ENCODE measurements at regions of chr1 and their contacts with region 1.

Region 1: DNA sequence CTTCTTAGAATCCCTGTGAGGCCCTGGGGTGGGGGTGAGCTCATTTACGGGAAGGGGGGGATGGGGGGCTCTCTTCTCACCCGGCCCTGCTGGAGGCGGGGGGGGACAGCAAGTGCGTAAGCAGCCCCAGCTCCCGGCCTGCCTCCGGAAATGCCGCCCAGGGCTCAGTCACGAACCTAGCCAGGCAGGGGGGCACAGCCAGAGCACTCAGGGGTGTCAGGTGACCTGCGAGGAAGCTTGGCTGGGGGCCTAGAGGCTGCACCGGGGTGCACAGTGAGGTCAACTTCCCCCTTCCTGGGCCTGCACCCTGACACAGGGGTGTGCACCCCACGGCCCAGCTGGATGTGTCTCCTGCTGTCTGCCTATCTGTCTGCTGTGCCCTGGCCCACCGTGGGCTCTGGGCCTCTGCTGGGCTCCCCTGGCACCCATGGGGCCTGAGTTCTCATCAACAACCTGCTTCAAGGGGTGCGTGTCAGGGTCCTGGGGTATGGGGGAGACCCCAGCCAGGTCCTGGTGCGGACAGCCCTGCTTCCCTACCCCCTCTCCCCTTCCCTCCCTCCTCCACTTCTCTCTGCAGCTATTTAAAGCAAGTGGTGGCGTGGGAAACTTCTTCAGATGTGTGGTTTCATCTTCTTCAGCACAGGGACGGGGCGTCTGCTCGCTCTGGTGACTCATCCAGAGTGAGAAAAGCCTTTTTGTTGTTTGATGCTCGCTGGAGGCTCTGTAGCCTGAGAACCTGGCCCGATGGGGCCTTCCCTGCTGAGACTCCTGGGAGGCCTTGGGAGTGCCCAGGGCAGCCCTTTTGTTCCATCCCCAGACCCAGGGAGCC is 92.5 kb upstream of the RUNX3 start:
- DNase-seq: peak; percentile 89
- CTCF ChIP-seq: no peak

Region 2: GRCh38 chr1:24955161-24955560 is 67.4 kb before region 1 on chr1:
- CTCF ChIA-PET with region 1: interaction called, 5 read pairs
- POLR2A ChIA-PET with region 1: interaction called, 11 read pairs
- DNase-seq: peak; percentile 62
- CTCF ChIP-seq: no peak

Region 3: DNA sequence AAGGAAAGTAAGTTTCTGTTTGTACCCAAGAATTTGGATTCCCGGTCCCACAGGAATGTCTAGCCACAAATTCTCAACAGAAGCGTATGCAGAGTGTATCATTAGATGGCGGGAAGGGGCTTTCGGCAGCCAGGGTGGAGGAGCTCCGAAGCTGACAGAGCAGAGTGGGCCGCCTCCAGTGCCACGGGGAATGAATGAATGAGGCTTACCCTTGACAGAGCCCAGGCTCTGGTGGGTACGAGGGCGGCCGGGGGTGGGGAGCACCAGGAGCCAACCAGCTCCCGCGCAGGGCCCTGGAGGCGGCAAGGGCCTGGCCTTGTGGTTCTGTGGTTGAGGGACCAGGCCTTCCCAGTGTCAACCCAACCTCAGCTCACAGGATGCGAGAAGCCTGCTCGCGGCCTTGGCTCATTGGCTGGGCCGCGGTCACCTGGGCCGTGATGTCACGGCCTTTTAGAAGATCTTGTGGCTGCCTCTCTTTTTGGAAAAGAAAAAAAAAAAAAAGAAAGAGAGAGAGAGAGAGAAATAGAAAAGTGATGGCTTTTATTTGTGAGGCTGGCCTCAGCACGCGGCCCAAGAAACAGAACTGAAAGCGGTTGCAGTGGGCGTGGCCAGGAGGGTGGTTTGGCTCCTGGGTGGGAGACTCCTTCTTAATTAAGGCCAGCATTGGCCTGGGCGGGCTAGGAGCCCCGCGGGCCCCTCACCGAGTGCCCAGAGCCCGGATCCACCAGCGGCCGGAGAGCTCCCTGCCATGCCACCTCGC is 57.6 kb before region 1 on chr1:
- CTCF ChIA-PET with region 1: interaction called, 14 read pairs
- POLR2A ChIA-PET with region 1: interaction called, 11 read pairs
- DNase-seq: peak; percentile 92
- CTCF ChIP-seq: no peak